PC-3 (cell line): ENCODE measurements at regions of chr12 and their contacts with region 1.

Region 1: DNA sequence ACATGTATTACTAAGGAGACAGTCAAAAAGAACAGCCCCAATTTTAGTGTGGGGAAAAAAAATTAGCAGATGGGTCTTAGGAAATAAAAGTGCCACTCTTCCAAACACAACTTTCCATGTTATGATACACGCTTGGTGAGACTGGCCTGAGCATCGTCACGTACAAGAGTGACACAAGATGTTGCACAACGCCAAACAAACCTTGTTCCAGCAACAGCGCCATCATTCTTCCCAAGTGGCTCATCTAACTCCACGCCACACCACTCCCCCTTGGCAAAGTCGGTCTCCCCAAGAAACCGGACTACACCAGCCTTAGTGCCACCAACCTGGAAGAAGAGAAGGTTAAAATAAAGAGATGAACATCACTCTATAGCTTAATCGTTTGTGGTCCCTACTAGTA is 58.7 kb downstream of the CLIP1 start:
- DNase-seq: no peak
- ATAC-seq: no peak
- H3K4me3 ChIP-seq: no peak overlapping the region
- H3K27ac ChIP-seq: no peak overlapping the region
- H3K4me1 ChIP-seq: peaks cover 19% of the 10 kb centered on the region
- H3K27me3 ChIP-seq: no peaks in the 10 kb centered on the region
- CTCF ChIP-seq: no peak

Region 2: GRCh38 chr12:122374707-122375106 is 10.9 kb after region 1 on chr12:
- CTCF ChIA-PET with region 1: no interaction called
- POLR2A ChIA-PET with region 1: interaction called, 10 read pairs
- intact Hi-C with region 1: no loop called
- DNase-seq: no peak
- ATAC-seq: no peak
- H3K4me3 ChIP-seq: no peak overlapping the region
- H3K27ac ChIP-seq: no peak overlapping the region
- H3K4me1 ChIP-seq: no peaks in the 10 kb centered on the region
- H3K27me3 ChIP-seq: no peaks in the 10 kb centered on the region
- CTCF ChIP-seq: no peak

Region 3: GRCh38 chr12:123337070-123337469 is 973.3 kb after region 1 on chr12:
- CTCF ChIA-PET with region 1: no interaction called
- POLR2A ChIA-PET with region 1: no interaction called
- intact Hi-C with region 1: no loop called
- DNase-seq: no peak
- ATAC-seq: no peak
- H3K4me3 ChIP-seq: no peak overlapping the region
- H3K27ac ChIP-seq: no peak overlapping the region
- H3K4me1 ChIP-seq: no peaks in the 10 kb centered on the region
- H3K27me3 ChIP-seq: no peaks in the 10 kb centered on the region
- CTCF ChIP-seq: no peak